ENCODE measurements at regions of chr10 and their contacts with region 1.

Region 1: DNA sequence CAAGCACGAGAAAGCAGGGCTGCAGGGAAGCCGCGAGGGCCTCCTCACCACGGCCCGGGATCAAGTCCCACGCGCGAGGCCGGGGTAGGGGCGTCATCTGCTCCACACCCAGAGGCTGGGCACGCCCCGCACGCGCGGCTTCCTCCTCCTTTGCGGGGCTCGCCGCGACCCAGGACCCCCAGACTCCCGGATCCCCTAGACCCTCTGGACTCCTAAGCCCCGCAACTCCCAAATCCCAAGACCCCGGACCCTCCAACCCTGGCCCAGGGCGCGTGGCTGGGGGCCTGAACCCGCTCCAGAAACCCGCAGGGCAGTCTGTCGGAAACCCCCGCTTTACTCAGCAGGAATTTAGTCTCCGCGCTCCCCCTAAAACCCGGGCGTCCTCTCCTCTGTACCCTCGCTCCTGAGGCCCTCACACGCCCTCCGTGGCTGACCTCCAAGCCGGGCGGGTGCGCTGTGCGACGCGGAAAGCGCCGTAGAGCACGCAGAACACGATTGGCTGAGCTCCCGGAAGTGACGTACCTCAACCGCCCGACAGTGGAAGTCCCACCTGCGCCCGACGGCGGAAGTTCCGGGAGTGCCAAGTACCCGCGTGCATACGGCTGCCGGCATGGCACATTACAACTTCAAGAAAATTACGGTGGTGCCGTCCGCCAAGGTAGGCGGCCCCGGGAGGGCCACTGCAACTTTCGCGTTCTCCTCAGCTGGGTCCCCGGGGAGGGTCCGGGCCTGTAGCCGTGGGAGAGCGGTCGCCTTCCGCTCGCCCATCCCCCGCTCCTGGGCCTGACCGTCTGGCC is at the start of gene GTPBP4:
- DNase-seq: peak; percentile 94
- ATAC-seq: peak; percentile 97
- H3K4me3 ChIP-seq: peak within 1 kb of the TSS; percentile 98 to 100 (median 99)
- H3K27ac ChIP-seq: peak within 1 kb of the TSS; percentile 79
- H3K4me1 ChIP-seq: peaks cover 67% of the 10 kb centered on the region
- H3K27me3 ChIP-seq: no peaks in the 10 kb centered on the region; a peak in 1 of 5 replicates
- CTCF ChIP-seq: peak; percentile 97
- EP300 ChIP-seq: peak; percentile 4 to 14; a peak in 2 of 4 replicates
- POLR2A ChIP-seq: peak; percentile 69 to 81
- RAD21 ChIP-seq: peak; percentile 6; the same call in 1 of the 2 replicates
- total RNA-seq, gene GTPBP4: 85.5 and 101 TPM in 2 replicates

Region 2: GRCh38 chr10:931416-932318 is 56.4 kb before region 1 on chr10 and contains the start of gene LARP4B:
- CTCF ChIA-PET with region 1: no interaction called
- POLR2A ChIA-PET with region 1: interaction called, 4 read pairs
- in situ Hi-C with region 1: loop called (anchors 10 kb)
- intact Hi-C with region 1: loop called (anchors 2 kb)
- DNase-seq: peak; percentile 93
- ATAC-seq: peak; percentile 89
- H3K4me3 ChIP-seq: peak within 1 kb of the TSS; percentile 83 to 88 (median 88)
- H3K27ac ChIP-seq: peak within 1 kb of the TSS; percentile 76
- H3K4me1 ChIP-seq: peaks cover 71% of the 10 kb centered on the region
- H3K27me3 ChIP-seq: peaks cover 0 to 3% of the 10 kb centered on the region in 2 experiments; a peak in 1 of 5 replicates
- CTCF ChIP-seq: no peak
- EP300 ChIP-seq: no peak
- POLR2A ChIP-seq: peak; percentile 58 to 61
- RAD21 ChIP-seq: no peak
- total RNA-seq, gene LARP4B: 19.5 and 23.6 TPM in 2 replicates

Region 3: DNA sequence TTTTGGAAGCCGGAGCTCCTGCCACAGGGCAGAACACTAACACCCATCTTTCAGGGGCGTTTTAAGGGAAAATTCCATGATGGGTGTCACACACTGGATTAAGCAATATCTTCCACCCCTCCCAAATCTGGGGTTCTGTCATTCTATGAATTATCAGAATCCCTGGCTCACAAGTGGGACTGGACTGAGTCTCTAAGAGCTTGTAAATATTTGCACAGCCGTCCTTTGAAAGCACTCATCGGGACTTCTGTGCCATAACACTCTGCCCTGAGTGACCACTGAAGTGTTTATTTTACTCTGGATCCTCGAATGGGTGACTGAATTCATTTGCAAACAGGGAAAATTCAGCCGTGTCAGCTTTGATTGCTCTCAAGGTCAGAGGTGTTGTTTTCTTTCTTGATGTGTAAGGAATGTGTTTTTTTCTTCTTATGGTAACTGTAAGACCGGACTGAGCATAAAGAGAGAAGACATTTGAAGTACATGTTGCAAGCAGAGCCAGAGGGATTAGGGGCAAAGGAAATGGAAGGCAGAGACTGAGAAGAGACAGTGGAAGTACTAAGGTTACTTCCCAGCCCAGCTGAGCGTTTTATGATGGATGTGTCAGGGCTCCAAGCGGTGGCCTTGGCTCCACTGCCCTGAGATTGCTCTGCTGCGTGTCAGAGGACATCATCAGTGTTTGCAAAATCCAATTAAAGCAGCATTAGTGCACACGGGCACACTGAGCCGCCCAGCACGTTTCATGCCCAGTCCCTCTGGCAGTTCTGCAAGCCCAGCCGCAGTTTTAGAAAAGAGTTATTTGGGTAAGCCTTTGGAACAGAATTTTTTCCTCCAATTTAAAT is 17.5 kb before region 1 on chr10:
- CTCF ChIA-PET with region 1: no interaction called
- POLR2A ChIA-PET with region 1: interaction called, 42 read pairs
- in situ Hi-C with region 1: no loop called
- intact Hi-C with region 1: loop called (anchors 2 kb)
- DNase-seq: peak; percentile 93
- ATAC-seq: peak; percentile 81
- H3K4me3 ChIP-seq: peak overlapping the region; percentile 35 to 56 (median 44)
- H3K27ac ChIP-seq: peak overlapping the region; percentile 68
- H3K4me1 ChIP-seq: peaks cover 68% of the 10 kb centered on the region
- H3K27me3 ChIP-seq: peaks cover 0 to 35% of the 10 kb centered on the region in 2 experiments; a peak in 3 of 5 replicates
- CTCF ChIP-seq: no peak
- EP300 ChIP-seq: peak in 1 of 2 experiments; percentile 74; a peak in 2 of 4 replicates
- POLR2A ChIP-seq: no peak
- RAD21 ChIP-seq: no peak

Region 4: GRCh38 chr10:1048732-1049424 is 60.8 kb after region 1 on chr10 and contains the start of gene IDI1:
- CTCF ChIA-PET with region 1: no interaction called
- POLR2A ChIA-PET with region 1: interaction called, 12 read pairs
- in situ Hi-C with region 1: no loop called
- intact Hi-C with region 1: loop called (anchors 5 kb)
- DNase-seq: peak; percentile 96
- ATAC-seq: peak; percentile 92
- H3K4me3 ChIP-seq: peak within 1 kb of the TSS; percentile 80 to 98 (median 93)
- H3K27ac ChIP-seq: peak within 1 kb of the TSS; percentile 96
- H3K4me1 ChIP-seq: peaks cover 59% of the 10 kb centered on the region
- H3K27me3 ChIP-seq: no peaks in the 10 kb centered on the region; a peak in 1 of 5 replicates
- CTCF ChIP-seq: no peak
- EP300 ChIP-seq: peak in 1 of 2 experiments; percentile 61; a peak in 2 of 4 replicates
- POLR2A ChIP-seq: peak; percentile 93 to 97
- RAD21 ChIP-seq: no peak
- total RNA-seq, gene IDI1: 145 and 247 TPM in 2 replicates